Left ventricle myocardium inferior (tissue), 1 donor: ENCODE measurements at regions of chr21 and their contacts with region 1.

Region 1: DNA sequence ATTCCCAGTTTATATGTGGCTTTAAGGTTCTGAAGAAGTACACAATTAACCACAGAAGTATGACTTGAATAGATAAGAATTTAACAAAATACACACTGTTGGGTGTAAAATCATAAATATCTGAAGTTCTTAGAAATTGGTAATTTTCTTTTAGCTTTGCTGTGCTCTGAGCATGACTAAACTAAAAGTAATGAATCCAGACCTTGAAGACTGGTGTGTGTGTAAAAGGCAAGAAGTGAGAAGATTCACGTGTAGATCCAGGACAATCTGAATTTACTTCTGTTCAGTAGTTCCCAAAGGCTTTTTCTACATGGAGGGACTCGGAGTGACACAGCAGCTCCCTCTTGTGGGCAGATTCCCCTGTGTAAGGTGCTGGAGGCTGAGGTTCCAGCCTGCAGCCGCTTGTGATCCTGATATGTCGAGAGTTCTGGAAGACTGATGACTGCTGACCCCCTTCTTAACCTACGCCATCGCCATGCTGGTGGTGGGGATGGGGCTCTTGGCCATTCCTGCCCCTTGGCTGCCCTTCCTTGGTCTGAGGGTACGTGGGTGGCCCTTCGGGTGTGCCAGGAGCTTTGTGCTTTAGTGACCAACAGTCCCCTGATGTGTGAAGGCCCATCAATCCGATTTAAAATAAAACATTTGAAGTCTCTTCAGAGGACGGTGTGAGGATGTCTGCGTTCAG is 62.7 kb downstream of the ADARB1 start:
- DNase-seq: peak; percentile 84
- H3K4me3 ChIP-seq: no peak overlapping the region
- H3K27ac ChIP-seq: no peak overlapping the region
- H3K4me1 ChIP-seq: peaks cover 45% of the 10 kb centered on the region
- H3K27me3 ChIP-seq: no peaks in the 10 kb centered on the region
- CTCF ChIP-seq: peak; percentile 93

Region 2: DNA sequence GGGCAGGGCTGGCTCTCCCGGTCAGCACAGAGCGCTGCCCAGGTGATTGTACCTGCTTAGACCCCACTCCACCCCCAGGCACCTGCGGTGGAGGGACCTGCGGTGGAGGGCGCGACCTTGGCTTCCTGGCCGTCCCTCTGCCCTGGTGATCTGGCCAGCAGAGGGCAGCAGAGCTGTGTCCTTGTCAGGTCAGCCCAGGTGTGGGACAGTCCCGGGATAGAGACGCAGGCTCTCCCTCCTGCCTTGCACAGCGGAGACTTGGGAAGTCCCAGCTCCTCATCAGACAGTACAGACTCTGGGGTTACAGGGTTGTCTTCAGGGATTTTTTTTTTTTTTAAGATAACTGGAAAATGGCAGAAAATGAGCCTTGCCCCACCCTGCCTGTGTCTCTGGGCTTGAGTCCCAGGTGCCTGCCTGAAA is 187.3 kb before region 1 on chr21:
- intact Hi-C with region 1: loop called (anchors 5 kb)
- DNase-seq: peak; percentile 89
- H3K4me3 ChIP-seq: no peak overlapping the region
- H3K27ac ChIP-seq: peak overlapping the region; percentile 85
- H3K4me1 ChIP-seq: peaks cover 91% of the 10 kb centered on the region
- H3K27me3 ChIP-seq: no peaks in the 10 kb centered on the region
- CTCF ChIP-seq: peak; percentile 97

Region 3: GRCh38 chr21:45618287-45618686 is 481.2 kb after region 1 on chr21:
- intact Hi-C with region 1: no loop called
- DNase-seq: no peak
- H3K4me3 ChIP-seq: no peak overlapping the region
- H3K27ac ChIP-seq: no peak overlapping the region
- H3K4me1 ChIP-seq: no peaks in the 10 kb centered on the region
- H3K27me3 ChIP-seq: peaks cover 92% of the 10 kb centered on the region
- CTCF ChIP-seq: no peak